ENCODE measurements at regions of chr3 and their contacts with region 1.

Region 1: GRCh38 chr3:143095813-143096212 is 23.8 kb upstream of the CHST2 start:
- DNase-seq: no peak

Region 2: GRCh38 chr3:143147707-143148106 is 51.9 kb after region 1 on chr3:
- intact Hi-C with region 1: loop called in 1 of 2 experiments (anchors 2 kb)
- DNase-seq: no peak

Measured in posterior vena cava (tissue), 2 donors.